ENCODE measurements at regions of chr15 and their contacts with region 1.

Region 1: DNA sequence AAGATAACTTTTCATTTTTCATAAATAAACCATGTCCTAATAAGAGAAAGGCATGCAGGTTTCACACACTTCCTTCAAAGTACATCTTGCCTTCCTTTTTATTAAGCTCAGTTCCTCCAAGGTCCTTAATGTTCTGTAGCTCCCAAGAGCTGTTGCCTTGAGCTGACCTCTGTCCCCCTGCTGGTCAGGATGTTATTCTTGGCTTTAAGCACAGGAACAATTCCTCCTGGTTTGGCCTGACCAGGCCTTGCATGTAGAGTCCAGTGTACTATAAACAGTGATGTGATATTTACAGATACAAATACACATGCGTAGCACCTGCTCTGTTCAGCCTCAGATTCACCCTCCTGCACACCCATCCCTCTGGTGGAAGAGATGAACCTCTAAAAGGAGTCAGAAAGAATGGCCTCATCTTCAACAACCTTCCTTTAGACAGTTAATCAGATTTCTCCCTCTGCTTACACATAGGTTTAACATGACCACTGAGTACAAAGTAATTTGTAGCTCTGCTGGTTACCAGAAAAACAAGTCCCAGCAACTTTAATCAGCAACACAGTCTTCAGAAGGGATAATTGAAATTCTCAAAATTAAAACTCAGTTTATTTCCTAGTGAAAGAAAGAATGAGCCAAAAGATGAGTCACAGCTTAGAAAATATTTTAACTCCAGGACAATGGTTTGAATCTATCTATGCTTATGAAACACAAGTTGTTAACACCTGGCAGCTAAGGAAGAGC is 46.5 kb downstream of the PTPN9 start:
- DNase-seq: peak; percentile 33 to 85
- ATAC-seq: peak; percentile 85 to 98 (median 95)
- H3K4me3 ChIP-seq: no peak overlapping the region
- H3K27ac ChIP-seq: peak overlapping the region in 9 of 10 donors; percentile 62 to 83 (median 74)
- H3K4me1 ChIP-seq: peaks cover 5 to 54% (median 33%) of the 10 kb centered on the region in 9 donors
- H3K27me3 ChIP-seq: no peaks in the 10 kb centered on the region
- CTCF ChIP-seq: peak; percentile 22 to 71 (median 56)

Region 2: GRCh38 chr15:74228723-74229081 is 1303.9 kb before region 1 on chr15:
- intact Hi-C with region 1: no loop called
- DNase-seq: peak in 1 of 2 donors; percentile 15
- ATAC-seq: peak in 5 of 8 donors; percentile 14 to 48 (median 35)
- H3K4me3 ChIP-seq: peak overlapping the region in 4 of 10 donors; percentile 0 to 28 (median 7)
- H3K27ac ChIP-seq: peak overlapping the region in 6 of 10 donors; percentile 15 to 64 (median 46)
- H3K4me1 ChIP-seq: peaks cover 3 to 19% (median 14%) of the 10 kb centered on the region in 9 donors
- H3K27me3 ChIP-seq: peaks cover 0 to 4% (median 0%) of the 10 kb centered on the region in 7 donors
- CTCF ChIP-seq: no peak

Region 3: GRCh38 chr15:75565062-75565970 is 32.7 kb after region 1 on chr15:
- intact Hi-C with region 1: loop called in 1 of 10 experiments (anchors 5 kb)
- DNase-seq: no peak
- ATAC-seq: no peak
- H3K4me3 ChIP-seq: no peak overlapping the region
- H3K27ac ChIP-seq: no peak overlapping the region
- H3K4me1 ChIP-seq: peaks cover 0 to 19% (median 6%) of the 10 kb centered on the region in 9 donors
- H3K27me3 ChIP-seq: no peaks in the 10 kb centered on the region
- CTCF ChIP-seq: no peak

Region 4: GRCh38 chr15:75625542-75626347 is 93.2 kb after region 1 on chr15 and contains the start of gene SNUPN:
- intact Hi-C with region 1: loop called in 1 of 10 experiments (anchors 5 kb)
- DNase-seq: peak; percentile 95 to 96
- ATAC-seq: peak; percentile 93 to 96 (median 95)
- H3K4me3 ChIP-seq: peak within 1 kb of the TSS; percentile 75 to 98 (median 88)
- H3K27ac ChIP-seq: peak within 1 kb of the TSS; percentile 76 to 100 (median 98)
- H3K4me1 ChIP-seq: peaks cover 0 to 30% (median 18%) of the 10 kb centered on the region in 9 donors
- H3K27me3 ChIP-seq: no peaks in the 10 kb centered on the region
- CTCF ChIP-seq: no peak
- total RNA-seq, gene SNUPN: 12.9 to 18.2 (median 16.1) TPM

Measured in heart right ventricle (tissue), 16 donors.